ENCODE measurements at regions of chr3 and their contacts with region 1.

Region 1: DNA sequence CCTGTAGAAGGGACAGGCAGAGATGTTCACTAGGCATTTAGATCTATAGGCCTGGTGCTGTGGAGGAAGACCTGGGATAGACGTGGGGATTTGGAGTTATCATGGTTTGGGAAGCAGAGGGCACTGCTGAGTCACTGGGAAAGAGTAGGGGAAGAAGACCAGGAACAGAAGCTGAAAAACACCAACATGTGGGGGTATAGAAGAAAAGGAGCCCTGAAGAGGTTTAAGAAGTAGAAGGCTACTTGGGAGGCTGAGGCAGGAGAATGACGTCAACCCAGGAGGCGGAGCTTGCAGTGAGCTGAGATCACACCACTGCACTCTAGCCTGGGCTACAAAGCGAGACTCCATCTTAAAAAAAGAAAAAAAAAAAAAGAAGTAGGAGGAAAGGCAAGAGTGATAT is 19.2 kb downstream of the GRK7 start:
- DNase-seq: no peak
- ATAC-seq: no peak
- H3K4me3 ChIP-seq: no peak overlapping the region
- H3K4me3 Mint-ChIP-seq: no peak overlapping the region
- H3K27ac ChIP-seq: no peak overlapping the region
- H3K27ac Mint-ChIP-seq: no peak overlapping the region
- H3K4me1 ChIP-seq: no peaks in the 10 kb centered on the region
- H3K4me1 Mint-ChIP-seq: no peaks in the 10 kb centered on the region
- H3K27me3 ChIP-seq: no peaks in the 10 kb centered on the region
- H3K27me3 Mint-ChIP-seq: no peaks in the 10 kb centered on the region
- CTCF ChIP-seq: no peak

Region 2: GRCh38 chr3:141763088-141763750 is 19.2 kb before region 1 on chr3 and contains the start of gene GRK7:
- CTCF ChIA-PET with region 1: no interaction called
- POLR2A ChIA-PET with region 1: no interaction called
- intact Hi-C with region 1: loop called in 1 of 2 experiments (anchors 2 kb)
- DNase-seq: no peak
- ATAC-seq: no peak
- H3K4me3 ChIP-seq: no peak within 1 kb of the TSS
- H3K4me3 Mint-ChIP-seq: no peak within 1 kb of the TSS
- H3K27ac ChIP-seq: no peak within 1 kb of the TSS
- H3K27ac Mint-ChIP-seq: no peak within 1 kb of the TSS
- H3K4me1 ChIP-seq: no peaks in the 10 kb centered on the region
- H3K4me1 Mint-ChIP-seq: no peaks in the 10 kb centered on the region
- H3K27me3 ChIP-seq: no peaks in the 10 kb centered on the region
- H3K27me3 Mint-ChIP-seq: no peaks in the 10 kb centered on the region
- CTCF ChIP-seq: no peak
- total RNA-seq, gene GRK7: 0.16 TPM in 1 of 2 experiments, not detected in the other

Region 3: GRCh38 chr3:141796081-141796888 is 13.8 kb after region 1 on chr3:
- CTCF ChIA-PET with region 1: no interaction called
- POLR2A ChIA-PET with region 1: interaction called, 12 read pairs
- intact Hi-C with region 1: no loop called
- DNase-seq: peak; percentile 19 to 84 (median 68)
- ATAC-seq: peak; percentile 72
- H3K4me3 ChIP-seq: peak overlapping the region; percentile 42 to 48
- H3K4me3 Mint-ChIP-seq: peak overlapping the region; percentile 91
- H3K27ac ChIP-seq: peak overlapping the region; percentile 64 to 86
- H3K27ac Mint-ChIP-seq: peak overlapping the region; percentile 98
- H3K4me1 ChIP-seq: peaks cover 51% of the 10 kb centered on the region
- H3K4me1 Mint-ChIP-seq: peaks cover 58% of the 10 kb centered on the region
- H3K27me3 ChIP-seq: no peaks in the 10 kb centered on the region
- H3K27me3 Mint-ChIP-seq: no peaks in the 10 kb centered on the region
- CTCF ChIP-seq: no peak

Measured in CD8-positive, alpha-beta T cell (primary cell).